GM12878 (cell line): ENCODE measurements at regions of chr5 and their contacts with region 1.

Region 1: GRCh38 chr5:90640484-90641059 is 82.0 kb downstream of the ADGRV1 start:
- DNase-seq: peak; percentile 79
- ATAC-seq: peak; percentile 78
- H3K4me3 ChIP-seq: peak overlapping the region; percentile 10; the same call in 1 of the 2 replicates
- H3K27ac ChIP-seq: peak overlapping the region; percentile 93
- H3K4me1 ChIP-seq: peaks cover 13% of the 10 kb centered on the region; the same call in 1 of the 2 replicates
- H3K27me3 ChIP-seq: no peaks in the 10 kb centered on the region
- CTCF ChIP-seq: no peak
- EP300 ChIP-seq: no peak
- POLR2A ChIP-seq: no peak
- RAD21 ChIP-seq: no peak

Region 2: GRCh38 chr5:90504743-90505142 is 135.8 kb before region 1 on chr5:
- CTCF ChIA-PET with region 1: no interaction called
- POLR2A ChIA-PET with region 1: no interaction called
- RAD21 ChIA-PET with region 1: no interaction called
- SMC1A ChIA-PET with region 1: no interaction called
- in situ Hi-C with region 1: no loop called
- intact Hi-C with region 1: no loop called
- DNase-seq: no peak
- ATAC-seq: no peak
- H3K4me3 ChIP-seq: no peak overlapping the region
- H3K27ac ChIP-seq: no peak overlapping the region
- H3K4me1 ChIP-seq: no peaks in the 10 kb centered on the region
- H3K27me3 ChIP-seq: no peaks in the 10 kb centered on the region
- CTCF ChIP-seq: no peak
- EP300 ChIP-seq: no peak
- POLR2A ChIP-seq: no peak
- RAD21 ChIP-seq: no peak

Region 3: GRCh38 chr5:90612919-90613318 is 27.7 kb before region 1 on chr5:
- CTCF ChIA-PET with region 1: interaction called, 5 read pairs
- POLR2A ChIA-PET with region 1: no interaction called
- RAD21 ChIA-PET with region 1: interaction called, 8 read pairs
- SMC1A ChIA-PET with region 1: interaction called, 31 read pairs
- in situ Hi-C with region 1: no loop called
- intact Hi-C with region 1: no loop called
- DNase-seq: peak; percentile 66
- ATAC-seq: peak; percentile 97
- H3K4me3 ChIP-seq: peak overlapping the region; percentile 33
- H3K27ac ChIP-seq: peak overlapping the region; percentile 88
- H3K4me1 ChIP-seq: peaks cover 16% of the 10 kb centered on the region
- H3K27me3 ChIP-seq: no peaks in the 10 kb centered on the region
- CTCF ChIP-seq: no peak
- EP300 ChIP-seq: no peak
- POLR2A ChIP-seq: no peak
- RAD21 ChIP-seq: no peak

Region 4: DNA sequence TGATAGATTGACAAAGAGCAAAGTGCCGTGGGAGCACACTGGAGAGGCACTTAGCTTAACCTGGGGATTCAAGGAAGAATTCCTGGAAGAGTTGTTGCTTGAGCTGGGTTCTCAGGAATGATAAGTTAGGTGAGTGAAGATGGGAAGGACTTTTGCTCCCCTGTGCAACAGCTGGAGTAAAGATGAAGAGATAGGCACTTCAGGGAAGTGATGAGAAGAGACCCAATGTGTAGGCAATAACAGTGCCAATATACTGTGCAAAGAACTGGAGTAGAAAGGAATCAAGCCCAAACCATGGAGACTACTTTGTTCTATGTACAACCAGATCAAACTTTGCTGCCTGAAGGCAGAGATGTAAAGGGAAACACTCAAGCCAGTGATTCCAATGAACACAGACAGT is 10.2 kb after region 1 on chr5:
- CTCF ChIA-PET with region 1: no interaction called
- POLR2A ChIA-PET with region 1: interaction called, 3 read pairs
- RAD21 ChIA-PET with region 1: interaction called, 5 read pairs
- SMC1A ChIA-PET with region 1: interaction called, 13 read pairs
- in situ Hi-C with region 1: no loop called
- intact Hi-C with region 1: no loop called
- DNase-seq: no peak
- ATAC-seq: no peak
- H3K4me3 ChIP-seq: no peak overlapping the region
- H3K27ac ChIP-seq: 0 out of 2 replicates have a peak overlapping the region, but pooled peaks have one; percentile 31
- H3K4me1 ChIP-seq: no peaks in the 10 kb centered on the region; the same call in 1 of the 2 replicates
- H3K27me3 ChIP-seq: no peaks in the 10 kb centered on the region
- CTCF ChIP-seq: no peak
- EP300 ChIP-seq: no peak
- POLR2A ChIP-seq: no peak
- RAD21 ChIP-seq: no peak

Region 5: DNA sequence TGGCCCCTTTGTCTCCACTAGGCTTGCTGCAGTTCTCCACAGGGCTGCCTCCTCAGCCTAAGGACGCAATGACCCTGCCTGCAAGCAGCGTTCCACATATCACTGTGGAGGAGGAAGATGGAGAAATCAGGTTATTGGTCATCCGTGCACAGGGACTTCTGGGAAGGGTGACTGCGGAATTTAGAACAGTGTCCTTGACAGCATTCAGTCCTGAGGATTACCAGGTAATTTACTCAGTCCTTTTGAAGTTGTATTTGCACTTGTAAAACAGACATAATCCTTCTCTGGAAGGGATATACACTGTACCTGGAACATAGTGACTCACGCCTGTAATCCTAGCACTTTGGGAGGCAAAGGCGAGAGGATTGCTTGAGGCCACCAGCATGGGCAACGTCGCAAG is 34.6 kb after region 1 on chr5:
- CTCF ChIA-PET with region 1: no interaction called
- POLR2A ChIA-PET with region 1: no interaction called
- RAD21 ChIA-PET with region 1: no interaction called
- SMC1A ChIA-PET with region 1: no interaction called
- in situ Hi-C with region 1: no loop called
- intact Hi-C with region 1: no loop called
- DNase-seq: no peak
- ATAC-seq: no peak
- H3K4me3 ChIP-seq: no peak overlapping the region
- H3K27ac ChIP-seq: no peak overlapping the region
- H3K4me1 ChIP-seq: no peaks in the 10 kb centered on the region
- H3K27me3 ChIP-seq: no peaks in the 10 kb centered on the region
- CTCF ChIP-seq: no peak
- EP300 ChIP-seq: no peak
- POLR2A ChIP-seq: no peak
- RAD21 ChIP-seq: no peak

Region 6: DNA sequence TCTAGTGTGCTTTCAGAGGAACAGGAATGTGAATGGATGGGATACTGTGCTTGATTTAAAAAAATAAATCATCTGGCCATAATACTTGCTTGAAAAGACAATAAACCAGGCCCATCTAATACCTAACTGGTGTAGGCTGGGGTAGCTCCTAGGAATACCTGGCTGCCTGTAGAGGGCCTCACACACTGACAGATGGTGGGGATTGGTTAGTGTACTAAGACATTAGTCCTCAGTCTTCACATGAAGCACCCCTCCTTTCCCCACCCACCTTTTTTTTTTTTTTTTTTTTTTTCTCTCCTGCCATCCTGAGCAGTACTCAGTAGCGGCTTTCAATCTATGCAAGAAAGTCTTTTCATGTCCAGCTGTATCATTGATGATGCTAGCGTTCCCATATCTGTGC is 48.5 kb after region 1 on chr5:
- CTCF ChIA-PET with region 1: no interaction called
- POLR2A ChIA-PET with region 1: no interaction called
- RAD21 ChIA-PET with region 1: no interaction called
- SMC1A ChIA-PET with region 1: no interaction called
- in situ Hi-C with region 1: no loop called
- intact Hi-C with region 1: no loop called
- DNase-seq: no peak
- ATAC-seq: no peak
- H3K4me3 ChIP-seq: no peak overlapping the region
- H3K27ac ChIP-seq: no peak overlapping the region
- H3K4me1 ChIP-seq: no peaks in the 10 kb centered on the region
- H3K27me3 ChIP-seq: no peaks in the 10 kb centered on the region
- CTCF ChIP-seq: 0 out of 6 replicates have a peak, but pooled peaks of 1 of the 3 experiments have one; percentile 0
- EP300 ChIP-seq: no peak
- POLR2A ChIP-seq: no peak
- RAD21 ChIP-seq: no peak